ENCODE measurements at regions of chr17 and their contacts with region 1.

Region 1: DNA sequence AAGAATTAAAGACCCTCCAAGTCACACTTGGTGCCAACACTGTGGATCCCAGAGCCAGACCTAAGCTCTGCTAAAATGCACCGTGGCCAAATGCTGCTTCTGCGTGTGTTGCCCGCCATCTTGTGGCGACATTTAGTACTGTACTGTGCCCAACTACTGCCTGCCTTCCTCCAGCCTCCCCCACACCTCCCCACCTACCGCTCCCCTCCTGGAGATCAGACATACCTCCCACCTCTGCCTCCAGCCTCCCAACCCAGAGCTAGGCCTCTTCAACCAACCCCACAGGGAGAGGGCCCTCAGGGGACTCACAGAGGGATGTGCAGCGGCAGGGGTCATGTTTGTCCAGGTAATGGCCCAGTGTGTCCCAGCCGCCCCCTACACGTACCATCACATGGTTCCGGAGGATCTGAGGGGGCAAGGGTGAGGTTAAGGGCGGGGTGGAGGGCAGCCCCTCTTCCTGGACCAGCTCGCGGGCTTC is 5.5 kb downstream of the GAS2L2 start:
- DNase-seq: peak; percentile 72 to 76 (median 75)
- H3K4me3 ChIP-seq: no peak overlapping the region
- H3K4me3 Mint-ChIP-seq: no peak overlapping the region
- H3K27ac ChIP-seq: no peak overlapping the region
- H3K27ac Mint-ChIP-seq: no peak overlapping the region
- H3K4me1 ChIP-seq: no peaks in the 10 kb centered on the region
- H3K4me1 Mint-ChIP-seq: peaks cover 0 to 9% (median 2%) of the 10 kb centered on the region in 4 donors
- H3K27me3 ChIP-seq: peaks cover 27% of the 10 kb centered on the region
- H3K27me3 Mint-ChIP-seq: peaks cover 24 to 38% of the 10 kb centered on the region in 2 donors

Region 2: DNA sequence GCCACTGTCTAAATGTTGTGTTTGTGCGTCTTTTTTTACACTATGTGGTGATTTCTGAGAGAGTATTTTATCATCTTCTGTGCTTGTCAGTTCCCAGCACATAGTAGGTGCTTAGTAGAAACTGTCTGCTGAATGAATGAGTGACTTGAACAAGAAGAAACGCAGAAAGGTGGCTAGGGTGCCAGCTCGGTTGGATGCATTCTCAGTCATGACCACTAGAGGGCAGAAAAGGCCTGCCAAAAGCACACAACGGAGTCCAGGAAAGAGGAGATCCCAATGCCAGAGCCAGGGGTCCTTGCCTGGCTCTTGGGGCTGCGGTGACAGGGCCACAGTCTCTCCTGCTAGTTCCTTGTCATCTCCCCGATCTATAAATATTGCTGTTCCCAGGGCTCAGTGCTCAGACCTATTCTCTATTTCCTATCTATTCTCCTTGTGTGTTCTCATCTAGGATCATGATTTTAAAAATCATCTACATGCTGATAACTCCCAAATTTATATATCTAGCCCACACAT is 1327.3 kb before region 1 on chr17:
- CTCF ChIA-PET with region 1: interaction called, 5 read pairs
- POLR2A ChIA-PET with region 1: no interaction called
- intact Hi-C with region 1: loop called (anchors 1 kb)
- DNase-seq: peak in 4 of 5 donors; percentile 47 to 59 (median 52)
- H3K4me3 ChIP-seq: no peak overlapping the region
- H3K4me3 Mint-ChIP-seq: no peak overlapping the region
- H3K27ac ChIP-seq: no peak overlapping the region
- H3K27ac Mint-ChIP-seq: no peak overlapping the region
- H3K4me1 ChIP-seq: no peaks in the 10 kb centered on the region
- H3K4me1 Mint-ChIP-seq: peaks cover 0 to 9% (median 3%) of the 10 kb centered on the region in 4 donors
- H3K27me3 ChIP-seq: no peaks in the 10 kb centered on the region
- H3K27me3 Mint-ChIP-seq: peaks cover 19 to 45% of the 10 kb centered on the region in 2 donors

Region 3: DNA sequence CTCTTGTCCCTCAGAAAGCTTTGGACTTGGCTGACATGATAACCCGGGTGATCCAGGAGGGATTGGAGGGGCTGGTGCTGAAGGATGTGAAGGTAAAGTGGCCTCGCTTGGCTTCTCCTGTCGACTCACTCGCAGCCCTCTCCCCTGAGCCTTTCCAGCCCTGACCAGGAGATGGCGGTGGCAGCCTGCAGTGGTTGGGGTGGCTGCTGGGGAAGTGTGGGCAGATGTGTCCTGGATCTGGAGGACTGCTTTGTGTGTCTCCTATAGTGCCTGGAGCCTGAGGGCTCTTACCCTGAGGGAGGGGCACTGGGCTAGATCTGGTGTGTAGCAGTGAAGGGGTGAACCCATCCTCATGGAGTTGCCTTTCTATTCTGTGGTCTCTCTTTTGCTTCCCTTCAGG is 749.4 kb before region 1 on chr17:
- CTCF ChIA-PET with region 1: interaction called, 3 read pairs
- POLR2A ChIA-PET with region 1: no interaction called
- intact Hi-C with region 1: loop called (anchors 1 kb)
- DNase-seq: peak; percentile 75 to 79 (median 77)
- H3K4me3 ChIP-seq: no peak overlapping the region
- H3K4me3 Mint-ChIP-seq: no peak overlapping the region
- H3K27ac ChIP-seq: no peak overlapping the region
- H3K27ac Mint-ChIP-seq: peak overlapping the region in 6 of 7 donors; percentile 20 to 88 (median 80)
- H3K4me1 ChIP-seq: peaks cover 7% of the 10 kb centered on the region
- H3K4me1 Mint-ChIP-seq: peaks cover 4 to 12% (median 5%) of the 10 kb centered on the region in 4 donors
- H3K27me3 ChIP-seq: no peaks in the 10 kb centered on the region
- H3K27me3 Mint-ChIP-seq: no peaks in the 10 kb centered on the region

Region 4: DNA sequence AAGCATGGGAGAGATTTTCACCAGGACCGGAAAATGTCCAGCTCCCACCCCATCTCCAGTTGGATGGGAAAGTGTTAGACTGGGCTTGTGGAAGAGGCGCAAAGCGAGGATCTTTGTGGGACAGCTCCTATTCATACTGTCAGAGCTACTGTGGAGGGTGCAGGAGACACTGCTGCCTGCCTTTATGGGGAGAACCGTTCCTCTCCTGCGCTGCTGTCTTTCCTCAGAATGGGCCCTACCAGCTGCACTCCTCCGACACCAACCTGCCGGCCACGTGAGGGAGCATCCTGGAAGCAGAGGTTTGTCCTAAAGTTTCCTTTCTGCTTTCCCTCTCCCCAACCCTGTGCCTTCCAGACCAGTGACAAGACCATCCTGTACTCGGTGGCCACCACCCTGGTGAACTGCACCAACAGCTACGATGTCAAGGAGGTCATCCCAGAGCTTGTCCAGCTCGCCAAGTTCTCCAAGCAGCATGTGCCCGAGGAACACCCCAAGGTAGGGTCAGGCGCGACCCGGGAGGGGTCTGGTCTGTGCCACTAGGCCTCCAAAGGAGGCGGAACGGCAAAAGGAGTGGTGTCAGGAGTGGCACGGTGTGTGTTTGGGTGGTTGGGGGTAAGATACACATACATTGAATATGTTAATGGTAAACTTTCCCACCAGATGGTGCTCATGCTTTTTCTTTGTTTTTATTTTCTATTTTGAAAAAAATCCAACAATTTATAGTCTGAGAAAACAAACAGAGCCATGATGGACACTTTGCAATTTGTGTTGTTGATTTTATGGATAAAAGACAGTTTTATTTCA is 576.4 kb before region 1 on chr17:
- CTCF ChIA-PET with region 1: interaction called, 61 read pairs
- POLR2A ChIA-PET with region 1: no interaction called
- intact Hi-C with region 1: no loop called
- DNase-seq: peak; percentile 41 to 75 (median 72)
- H3K4me3 ChIP-seq: peak overlapping the region in 1 of 2 donors; percentile 18
- H3K4me3 Mint-ChIP-seq: peak overlapping the region; percentile 51 to 81 (median 68)
- H3K27ac ChIP-seq: no peak overlapping the region
- H3K27ac Mint-ChIP-seq: peak overlapping the region; percentile 82 to 93 (median 91)
- H3K4me1 ChIP-seq: peaks cover 41% of the 10 kb centered on the region
- H3K4me1 Mint-ChIP-seq: peaks cover 32 to 60% (median 42%) of the 10 kb centered on the region in 4 donors
- H3K27me3 ChIP-seq: no peaks in the 10 kb centered on the region
- H3K27me3 Mint-ChIP-seq: no peaks in the 10 kb centered on the region

Region 5: DNA sequence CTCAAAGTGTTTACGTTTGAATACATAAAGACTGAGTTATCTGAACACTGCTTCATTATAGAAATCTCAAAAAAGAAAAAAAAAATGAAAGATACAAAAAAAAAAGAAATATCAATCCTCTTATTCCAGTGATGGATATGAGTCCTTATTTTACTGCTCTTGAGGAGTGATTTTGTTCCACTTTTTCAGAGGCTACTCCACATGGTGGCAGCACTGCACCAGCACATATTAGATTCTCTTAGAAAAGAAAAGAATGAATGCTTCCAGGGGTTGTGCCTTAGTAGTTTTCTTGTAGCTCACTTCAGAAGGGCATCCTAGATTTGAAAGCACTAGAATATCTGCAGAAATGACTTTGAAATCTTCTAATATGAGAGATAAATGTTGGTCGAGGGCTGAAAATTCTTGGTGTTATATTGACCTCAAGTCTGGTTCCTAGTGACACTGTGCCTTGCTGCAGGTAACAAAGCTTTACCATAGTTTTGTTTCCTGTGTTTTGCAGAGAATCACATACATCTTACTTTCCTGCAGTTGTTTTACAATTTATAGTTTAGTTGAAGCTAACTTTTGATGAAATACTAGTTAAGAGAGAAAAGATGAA is 134.6 kb before region 1 on chr17:
- CTCF ChIA-PET with region 1: interaction called, 64 read pairs
- POLR2A ChIA-PET with region 1: interaction called, 5 read pairs
- intact Hi-C with region 1: no loop called
- DNase-seq: peak in 4 of 5 donors; percentile 16 to 24 (median 20)
- H3K4me3 ChIP-seq: no peak overlapping the region
- H3K4me3 Mint-ChIP-seq: no peak overlapping the region
- H3K27ac ChIP-seq: no peak overlapping the region
- H3K27ac Mint-ChIP-seq: peak overlapping the region in 1 of 7 donors; percentile 68
- H3K4me1 ChIP-seq: no peaks in the 10 kb centered on the region
- H3K4me1 Mint-ChIP-seq: peaks cover 0 to 3% (median 3%) of the 10 kb centered on the region in 4 donors
- H3K27me3 ChIP-seq: no peaks in the 10 kb centered on the region
- H3K27me3 Mint-ChIP-seq: no peaks in the 10 kb centered on the region

Region 6: GRCh38 chr17:35764123-35764991 is 16.8 kb after region 1 on chr17:
- CTCF ChIA-PET with region 1: interaction called, 27 read pairs
- POLR2A ChIA-PET with region 1: no interaction called
- intact Hi-C with region 1: no loop called
- DNase-seq: peak; percentile 78 to 84 (median 78)
- H3K4me3 ChIP-seq: peak overlapping the region; percentile 54 to 57
- H3K4me3 Mint-ChIP-seq: peak overlapping the region; percentile 89 to 98 (median 95)
- H3K27ac ChIP-seq: peak overlapping the region; percentile 15
- H3K27ac Mint-ChIP-seq: peak overlapping the region; percentile 59 to 93 (median 83)
- H3K4me1 ChIP-seq: peaks cover 6% of the 10 kb centered on the region
- H3K4me1 Mint-ChIP-seq: peaks cover 1 to 13% (median 6%) of the 10 kb centered on the region in 4 donors
- H3K27me3 ChIP-seq: no peaks in the 10 kb centered on the region
- H3K27me3 Mint-ChIP-seq: no peaks in the 10 kb centered on the region

Measured in CD4-positive, alpha-beta memory T cell (primary cell).